Ascending aorta (tissue), 2 donors: ENCODE measurements at regions of chr11 and their contacts with region 1.

Region 1: DNA sequence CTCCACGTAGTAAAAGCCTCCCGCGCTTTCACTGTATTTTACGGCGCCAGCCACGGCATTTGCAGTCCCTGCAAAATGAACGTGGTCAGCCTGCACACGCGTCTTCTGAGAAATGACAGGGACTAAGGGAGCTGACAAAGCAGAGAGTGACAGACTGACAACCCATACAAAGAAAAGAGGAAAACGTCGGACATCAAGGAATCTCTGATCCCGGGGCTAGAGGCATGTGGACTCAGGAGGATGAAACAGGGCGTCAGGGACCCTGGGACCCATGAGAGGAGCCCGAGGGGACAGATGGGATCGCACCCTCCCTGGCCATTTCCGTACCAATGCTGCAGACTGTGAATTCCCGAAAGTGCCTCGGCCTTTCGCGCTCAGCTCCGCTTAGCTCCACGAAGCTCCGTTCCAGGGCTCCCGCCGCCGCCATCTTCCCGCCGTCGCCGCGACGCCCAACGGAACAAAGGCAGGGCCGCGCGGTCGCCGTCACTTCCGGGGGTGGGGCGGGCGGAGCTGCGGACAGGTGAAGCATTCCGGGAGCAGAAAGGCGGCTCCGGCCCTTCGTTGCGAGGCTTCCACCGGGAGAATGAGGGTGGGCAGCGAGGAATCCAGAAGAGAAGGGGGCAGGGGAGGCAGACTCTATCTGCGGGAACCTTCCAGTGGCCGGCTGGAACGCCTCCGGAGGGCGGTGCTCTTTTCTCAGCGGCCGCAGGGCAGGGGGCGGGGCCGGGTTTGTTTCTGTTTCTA is at the start of gene NUP160:
- DNase-seq: peak; percentile 32 to 92
- H3K4me3 ChIP-seq: peak within 1 kb of the TSS; percentile 80 to 91
- H3K27ac ChIP-seq: peak within 1 kb of the TSS; percentile 87 to 96
- H3K4me1 ChIP-seq: peaks cover 4 to 11% of the 10 kb centered on the region in 2 donors
- H3K27me3 ChIP-seq: no peaks in the 10 kb centered on the region
- CTCF ChIP-seq: no peak
- total RNA-seq, gene NUP160: 14.0 TPM

Region 2: DNA sequence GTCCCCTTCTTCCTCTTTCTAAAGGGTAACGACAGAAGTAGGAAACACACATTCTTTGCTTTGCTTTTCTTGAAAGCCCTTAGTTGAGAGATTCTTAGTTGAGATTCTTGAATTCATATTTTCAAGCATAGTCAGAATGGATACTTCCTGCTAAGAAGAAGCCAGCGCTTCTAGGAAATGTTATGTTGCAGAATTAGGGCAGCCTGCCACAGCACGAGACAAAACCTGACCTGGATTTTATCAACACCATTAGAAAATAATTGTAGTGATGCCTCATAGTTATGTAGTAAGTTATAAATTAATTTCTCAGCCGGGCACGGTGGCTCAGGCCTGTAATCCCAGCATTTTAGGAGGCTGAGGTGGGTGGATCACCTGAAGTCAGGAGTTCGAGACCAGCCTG is 38.0 kb after region 1 on chr11:
- intact Hi-C with region 1: no loop called
- DNase-seq: peak in 1 of 2 donors; percentile 68
- H3K4me3 ChIP-seq: no peak overlapping the region
- H3K27ac ChIP-seq: no peak overlapping the region
- H3K4me1 ChIP-seq: no peaks in the 10 kb centered on the region
- H3K27me3 ChIP-seq: no peaks in the 10 kb centered on the region
- CTCF ChIP-seq: no peak

Region 3: DNA sequence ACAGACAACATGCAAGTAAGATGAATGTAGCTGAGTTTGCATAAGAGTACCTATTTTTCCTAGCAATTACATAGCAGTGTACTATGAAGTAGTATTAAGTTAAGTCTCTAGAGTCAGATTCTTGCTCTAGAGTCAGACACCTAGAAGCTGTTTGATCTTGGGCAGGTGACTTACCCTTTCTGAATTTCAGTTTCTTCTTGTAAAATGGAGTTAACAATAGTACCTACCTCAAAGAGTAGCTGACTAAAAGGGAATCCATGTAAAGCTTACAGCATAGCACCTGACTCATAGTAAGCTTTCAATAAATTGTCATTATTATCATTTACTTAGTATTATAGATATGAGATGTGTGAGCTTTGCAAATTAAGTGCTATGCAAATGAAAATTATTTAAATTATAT is 84.5 kb after region 1 on chr11:
- intact Hi-C with region 1: loop called (anchors 5 kb)
- DNase-seq: no peak
- H3K4me3 ChIP-seq: no peak overlapping the region
- H3K27ac ChIP-seq: peak overlapping the region in 1 of 2 donors; percentile 56
- H3K4me1 ChIP-seq: no peaks in the 10 kb centered on the region
- H3K27me3 ChIP-seq: no peaks in the 10 kb centered on the region
- CTCF ChIP-seq: no peak

Region 4: DNA sequence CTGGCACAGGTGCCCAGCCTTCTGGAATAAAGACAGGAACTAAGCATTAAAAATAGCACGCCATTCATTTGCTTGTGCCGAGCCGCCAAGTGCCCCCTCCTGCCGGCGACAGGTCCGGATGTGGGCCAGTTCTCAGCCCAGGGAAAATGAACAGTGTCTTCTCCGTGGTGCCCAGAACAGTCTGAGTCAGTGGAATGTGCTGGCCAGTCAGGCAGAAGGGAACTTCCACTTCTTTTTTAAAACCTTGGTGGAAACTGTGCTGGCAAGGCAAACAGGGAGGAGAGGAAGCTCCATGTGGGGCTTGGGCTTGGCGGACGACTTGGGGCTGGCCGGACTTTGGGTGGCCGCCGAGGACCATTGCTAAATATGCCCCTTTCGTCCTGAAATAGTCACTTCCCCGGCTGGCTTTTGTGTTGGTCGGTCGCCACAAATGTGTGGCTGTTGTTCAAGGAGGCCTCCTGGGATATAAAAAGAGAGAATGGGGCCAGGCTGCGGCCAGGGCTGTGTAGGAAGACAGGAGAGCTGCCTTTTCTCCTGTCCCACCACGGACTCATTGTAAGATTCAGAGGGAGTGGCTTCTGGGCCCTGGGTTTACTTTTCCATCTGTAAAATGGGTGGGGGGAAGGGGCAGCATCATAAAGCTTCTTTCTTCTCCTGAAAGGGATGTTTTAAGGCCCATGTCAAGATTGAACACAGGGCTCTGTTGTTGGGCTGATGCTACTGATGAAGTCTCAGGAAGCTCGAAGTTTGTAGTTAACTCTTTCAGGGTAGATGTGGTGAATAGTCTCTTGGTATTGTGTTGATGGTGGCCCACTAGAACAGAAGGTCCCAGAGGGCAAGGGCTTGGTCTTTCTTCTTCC is 233.3 kb after region 1 on chr11:
- intact Hi-C with region 1: loop called (anchors 1 kb)
- DNase-seq: peak; percentile 74 to 95
- H3K4me3 ChIP-seq: no peak overlapping the region
- H3K27ac ChIP-seq: peak overlapping the region; percentile 64 to 78
- H3K4me1 ChIP-seq: peaks cover 0 to 15% of the 10 kb centered on the region in 2 donors
- H3K27me3 ChIP-seq: no peaks in the 10 kb centered on the region
- CTCF ChIP-seq: no peak

Region 5: DNA sequence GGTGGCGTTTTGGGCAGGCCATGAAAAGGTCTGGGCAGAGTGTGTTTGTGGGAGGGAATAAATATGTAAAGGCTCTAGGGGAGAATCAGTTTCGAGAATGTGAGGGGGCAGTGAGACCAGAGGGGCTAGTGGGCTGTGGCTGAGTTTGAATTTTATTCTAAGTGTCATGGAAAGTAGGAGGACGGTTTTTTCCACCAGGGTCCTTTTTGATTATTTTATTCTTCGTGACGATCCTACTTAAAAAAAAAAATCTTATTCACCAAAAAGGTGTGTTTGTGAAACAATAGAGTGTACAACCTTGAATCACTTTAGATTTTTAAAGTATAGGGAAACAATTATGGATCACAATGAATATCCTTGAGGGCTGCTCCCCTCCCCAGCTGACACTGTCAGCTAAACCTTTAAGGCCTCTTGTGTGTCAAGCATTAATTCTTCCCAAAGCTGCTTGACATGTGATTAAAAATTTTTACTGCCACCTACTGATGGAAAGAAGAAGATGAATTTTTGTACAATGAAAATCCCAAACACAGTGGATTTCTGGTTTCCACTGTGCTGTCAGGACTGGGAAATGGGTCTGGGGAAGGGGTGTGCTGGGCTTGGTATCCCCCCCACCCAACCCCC is 261.1 kb after region 1 on chr11:
- intact Hi-C with region 1: loop called (anchors 2 kb)
- DNase-seq: no peak
- H3K4me3 ChIP-seq: peak overlapping the region in 1 of 2 donors; percentile 44
- H3K27ac ChIP-seq: no peak overlapping the region
- H3K4me1 ChIP-seq: peaks cover 4 to 9% of the 10 kb centered on the region in 2 donors
- H3K27me3 ChIP-seq: no peaks in the 10 kb centered on the region
- CTCF ChIP-seq: peak; percentile 27 to 50 (median 48)